Heart left ventricle (tissue), 16 donors: ENCODE measurements at regions of chr2 and their contacts with region 1.

Region 1: DNA sequence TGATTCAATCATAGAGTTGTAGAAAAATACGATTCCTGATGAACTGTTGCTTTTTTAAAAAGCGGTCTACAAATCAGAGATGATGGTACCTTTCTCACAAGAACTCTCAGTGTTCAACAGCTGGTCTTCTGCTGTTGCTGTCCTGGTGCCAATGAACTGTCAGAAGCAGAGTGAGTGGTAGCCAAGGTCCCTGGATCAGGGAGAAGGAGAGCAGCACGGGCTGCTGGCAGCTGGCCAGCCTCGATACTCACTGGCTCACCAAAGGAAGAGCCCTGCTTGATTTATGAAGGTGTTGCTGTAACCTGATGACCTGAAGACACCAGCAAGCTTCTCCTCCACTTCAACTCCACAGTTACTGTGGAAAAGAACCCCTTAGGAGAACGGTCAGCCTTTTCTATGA is 300.8 kb upstream of the SOX11 start:
- DNase-seq: peak; percentile 37 to 80 (median 73)
- ATAC-seq: peak; percentile 67 to 90 (median 84)
- H3K4me3 ChIP-seq: no peak overlapping the region
- H3K27ac ChIP-seq: no peak overlapping the region
- H3K4me1 ChIP-seq: peaks cover 0 to 5% (median 0%) of the 10 kb centered on the region in 12 donors
- H3K27me3 ChIP-seq: no peaks in the 10 kb centered on the region
- CTCF ChIP-seq: no peak
- POLR2A ChIP-seq: no peak

Region 2: GRCh38 chr2:5359397-5359796 is 32.0 kb before region 1 on chr2:
- intact Hi-C with region 1: no loop called
- DNase-seq: no peak
- ATAC-seq: no peak
- H3K4me3 ChIP-seq: no peak overlapping the region
- H3K27ac ChIP-seq: no peak overlapping the region
- H3K4me1 ChIP-seq: no peaks in the 10 kb centered on the region
- H3K27me3 ChIP-seq: no peaks in the 10 kb centered on the region
- CTCF ChIP-seq: no peak
- POLR2A ChIP-seq: no peak

Region 3: GRCh38 chr2:5520463-5520972 is 129.2 kb after region 1 on chr2:
- intact Hi-C with region 1: loop called in 2 of 10 experiments (anchors 10 kb)
- DNase-seq: peak in 4 of 5 donors; percentile 39 to 74 (median 66)
- ATAC-seq: peak; percentile 96 to 98 (median 96)
- H3K4me3 ChIP-seq: no peak overlapping the region
- H3K27ac ChIP-seq: peak overlapping the region in 11 of 12 donors; percentile 33 to 84 (median 67)
- H3K4me1 ChIP-seq: peaks cover 0 to 20% (median 6%) of the 10 kb centered on the region in 12 donors
- H3K27me3 ChIP-seq: no peaks in the 10 kb centered on the region
- CTCF ChIP-seq: no peak
- POLR2A ChIP-seq: no peak

Region 4: DNA sequence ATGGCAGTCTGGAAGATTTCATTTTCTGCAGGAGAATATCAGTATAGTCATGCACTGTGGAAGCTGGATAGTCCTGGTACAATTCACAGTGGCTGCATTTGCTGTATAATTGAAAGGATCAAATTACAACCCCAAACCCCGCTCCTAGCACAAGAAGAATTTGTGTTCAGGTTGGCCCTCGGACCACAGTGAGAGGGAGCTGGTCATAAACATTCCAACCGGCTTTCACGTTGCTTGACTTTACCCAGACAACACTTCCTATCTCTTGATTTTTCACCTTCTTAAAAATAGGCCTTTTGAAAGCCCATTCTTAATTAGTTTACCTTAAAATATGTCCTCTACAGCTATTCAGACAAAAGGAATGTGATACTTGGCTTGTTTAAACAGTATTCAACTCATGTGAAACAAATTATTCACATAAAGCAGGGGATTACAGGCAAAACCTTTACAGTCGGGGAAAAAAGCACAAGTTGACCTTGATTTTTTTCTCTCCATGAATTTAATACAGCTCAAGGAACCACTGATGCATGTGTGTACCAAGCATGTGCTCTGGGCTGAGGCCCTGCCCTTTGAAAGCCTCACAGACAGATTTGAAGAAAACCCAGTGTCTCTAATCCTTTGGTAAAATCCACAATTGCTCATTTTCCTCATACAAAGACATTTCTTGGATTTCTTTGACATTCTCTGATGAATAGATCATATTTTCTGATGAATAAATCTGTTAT is 157.8 kb after region 1 on chr2:
- intact Hi-C with region 1: no loop called
- DNase-seq: no peak
- ATAC-seq: no peak
- H3K4me3 ChIP-seq: no peak overlapping the region
- H3K27ac ChIP-seq: peak overlapping the region in 1 of 12 donors; percentile 25
- H3K4me1 ChIP-seq: no peaks in the 10 kb centered on the region
- H3K27me3 ChIP-seq: no peaks in the 10 kb centered on the region
- CTCF ChIP-seq: no peak
- POLR2A ChIP-seq: no peak